ENCODE measurements at regions of chr2 and their contacts with region 1.

Region 1: GRCh38 chr2:128062571-128062970 is 28.4 kb upstream of the UGGT1 start:
- DNase-seq: no peak
- H3K4me3 ChIP-seq: no peak overlapping the region
- H3K27ac ChIP-seq: no peak overlapping the region
- H3K4me1 ChIP-seq: no peaks in the 10 kb centered on the region
- H3K27me3 ChIP-seq: peaks cover 0 to 2% of the 10 kb centered on the region in 2 experiments
- CTCF ChIP-seq: no peak
- POLR2A ChIP-seq: no peak

Region 2: DNA sequence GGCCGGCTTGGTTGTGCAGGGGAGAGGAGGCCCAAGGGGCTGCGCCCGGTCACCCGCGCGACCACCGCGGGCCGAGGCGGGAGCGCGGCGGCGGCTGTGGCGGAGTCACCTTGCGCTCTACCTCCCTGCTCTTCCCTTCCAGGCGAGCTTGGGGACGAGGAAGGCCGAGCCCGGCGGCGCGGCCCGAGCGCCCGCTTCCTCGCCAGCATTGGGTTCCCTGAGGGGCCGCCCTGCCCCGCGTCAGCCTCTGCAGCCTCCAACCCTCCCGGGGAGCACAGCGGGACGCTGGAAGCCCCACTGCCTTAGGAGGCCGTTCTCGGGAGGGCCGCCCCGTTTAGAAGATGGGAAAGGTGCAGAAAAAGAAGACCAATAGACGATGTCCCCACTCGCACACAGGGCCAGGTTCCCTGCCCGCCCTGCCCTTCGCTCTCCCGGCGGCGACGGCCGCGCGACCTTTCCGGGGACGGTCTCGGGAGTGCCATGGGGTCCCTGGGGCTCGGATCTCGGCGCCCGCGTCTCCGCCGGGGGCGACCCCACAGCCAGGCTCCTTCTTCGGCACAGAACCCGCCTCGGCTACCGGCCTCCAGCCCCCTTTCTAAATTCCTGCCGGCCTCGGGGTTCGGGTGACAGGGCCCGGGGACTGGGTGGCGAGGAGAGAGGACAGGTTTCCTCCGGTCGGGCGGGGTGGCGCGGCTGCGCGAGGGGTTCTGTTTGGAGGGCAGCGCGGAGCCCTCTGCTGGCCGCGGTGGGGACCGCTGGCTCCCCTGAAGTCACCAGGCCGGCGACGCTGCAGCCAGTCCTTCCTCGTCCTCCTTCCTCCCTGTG is 170.6 kb after region 1 on chr2:
- CTCF ChIA-PET with region 1: interaction called, 10 read pairs
- POLR2A ChIA-PET with region 1: no interaction called
- dilution Hi-C with region 1: no loop called
- intact Hi-C with region 1: loop called (anchors 1 kb)
- DNase-seq: peak; percentile 72
- H3K4me3 ChIP-seq: peak overlapping the region; percentile 52 to 70 (median 57)
- H3K27ac ChIP-seq: no peak overlapping the region
- H3K4me1 ChIP-seq: peaks cover 13% of the 10 kb centered on the region
- H3K27me3 ChIP-seq: no peaks in the 10 kb centered on the region
- CTCF ChIP-seq: peak; percentile 83 to 98
- POLR2A ChIP-seq: no peak

Region 3: GRCh38 chr2:128380961-128381938 is 318.7 kb after region 1 on chr2:
- CTCF ChIA-PET with region 1: no interaction called
- POLR2A ChIA-PET with region 1: no interaction called
- dilution Hi-C with region 1: no loop called
- intact Hi-C with region 1: no loop called
- DNase-seq: no peak
- H3K4me3 ChIP-seq: no peak overlapping the region
- H3K27ac ChIP-seq: no peak overlapping the region
- H3K4me1 ChIP-seq: no peaks in the 10 kb centered on the region
- H3K27me3 ChIP-seq: peaks cover 0 to 3% of the 10 kb centered on the region in 2 experiments
- CTCF ChIP-seq: no peak
- POLR2A ChIP-seq: no peak

Region 4: GRCh38 chr2:128754246-128754724 is 691.7 kb after region 1 on chr2:
- CTCF ChIA-PET with region 1: interaction called, 6 read pairs
- POLR2A ChIA-PET with region 1: no interaction called
- dilution Hi-C with region 1: no loop called
- intact Hi-C with region 1: loop called (anchors 5 kb)
- DNase-seq: no peak
- H3K4me3 ChIP-seq: no peak overlapping the region
- H3K27ac ChIP-seq: no peak overlapping the region
- H3K4me1 ChIP-seq: no peaks in the 10 kb centered on the region
- H3K27me3 ChIP-seq: no peaks in the 10 kb centered on the region
- CTCF ChIP-seq: no peak
- POLR2A ChIP-seq: no peak

Region 5: DNA sequence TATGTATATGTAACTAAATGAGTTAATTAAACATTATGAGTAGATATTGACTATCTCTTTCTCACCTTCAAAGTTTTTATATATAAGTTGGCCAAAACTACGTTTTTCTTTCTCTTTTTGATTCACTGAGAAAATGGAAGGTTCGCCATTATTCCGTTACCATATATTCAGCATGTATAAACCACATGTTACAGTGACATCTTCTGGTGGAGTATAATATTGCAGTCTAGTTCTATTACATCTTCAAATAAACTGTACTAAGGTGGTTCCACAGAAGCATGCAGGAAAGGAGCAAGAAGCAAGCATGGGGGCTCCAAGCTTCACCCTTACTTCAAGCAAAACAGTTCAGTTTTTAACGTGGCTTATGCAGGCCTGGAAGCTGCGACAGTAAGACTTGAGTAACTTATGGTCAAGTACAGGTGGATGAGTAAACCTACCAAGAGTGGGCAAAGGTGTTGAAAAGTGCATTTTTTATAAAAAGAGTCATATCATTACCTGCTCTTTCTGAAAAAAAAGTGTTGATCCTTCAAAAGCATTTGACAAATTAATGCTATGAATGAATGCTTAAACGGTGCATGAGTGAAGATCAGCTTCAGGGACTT is 1787.1 kb after region 1 on chr2:
- CTCF ChIA-PET with region 1: interaction called, 8 read pairs
- POLR2A ChIA-PET with region 1: no interaction called
- dilution Hi-C with region 1: no loop called
- intact Hi-C with region 1: loop called (anchors 5 kb)
- DNase-seq: peak; percentile 74
- H3K4me3 ChIP-seq: no peak overlapping the region
- H3K27ac ChIP-seq: no peak overlapping the region
- H3K4me1 ChIP-seq: peaks cover 2% of the 10 kb centered on the region
- H3K27me3 ChIP-seq: no peaks in the 10 kb centered on the region
- CTCF ChIP-seq: peak; percentile 37 to 38
- POLR2A ChIP-seq: no peak

Region 6: DNA sequence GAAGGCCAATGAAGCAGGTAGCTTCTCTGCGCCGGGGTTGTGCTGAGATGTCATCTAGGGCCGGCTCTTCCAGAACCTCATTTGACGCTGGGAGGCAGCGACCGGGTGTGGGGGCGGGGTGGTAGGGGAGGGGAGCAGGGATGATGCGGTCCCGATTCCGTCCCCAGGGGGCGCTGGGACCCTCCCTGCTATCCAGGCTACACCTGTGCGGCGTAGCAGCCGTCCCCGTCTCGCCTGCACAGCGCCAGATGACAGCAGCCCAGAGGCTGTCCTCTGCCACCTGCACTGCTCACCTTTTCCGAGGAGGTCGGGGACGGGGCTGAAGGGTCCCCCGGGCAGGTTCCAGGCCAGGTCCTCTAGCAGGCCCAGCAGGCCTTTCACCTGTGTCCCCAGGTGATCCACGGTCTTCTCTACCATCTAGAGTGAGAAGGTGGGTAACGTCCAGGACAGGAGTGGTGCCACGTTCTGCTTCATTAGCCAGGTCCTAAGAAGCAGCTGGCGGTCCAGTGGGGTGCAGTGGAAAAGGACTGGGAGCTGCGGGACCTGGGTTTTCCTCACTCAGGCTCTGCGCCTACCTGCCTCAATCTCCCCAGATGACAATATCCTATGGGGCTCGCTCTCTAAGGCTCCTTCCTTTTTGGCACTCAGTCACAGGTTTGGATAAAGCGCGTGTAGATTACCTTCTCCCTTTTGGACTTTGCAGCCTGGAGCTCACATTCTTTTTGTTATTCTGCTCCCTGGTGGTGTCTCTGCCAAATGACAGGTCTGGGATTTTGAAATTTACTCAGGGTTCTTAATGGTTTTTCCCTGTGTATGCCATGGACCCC is 1860.9 kb after region 1 on chr2:
- CTCF ChIA-PET with region 1: interaction called, 39 read pairs
- POLR2A ChIA-PET with region 1: no interaction called
- dilution Hi-C with region 1: no loop called
- intact Hi-C with region 1: no loop called
- DNase-seq: peak; percentile 36
- H3K4me3 ChIP-seq: no peak overlapping the region
- H3K27ac ChIP-seq: no peak overlapping the region
- H3K4me1 ChIP-seq: no peaks in the 10 kb centered on the region
- H3K27me3 ChIP-seq: no peaks in the 10 kb centered on the region
- CTCF ChIP-seq: peak; percentile 12 to 37
- POLR2A ChIP-seq: no peak

Measured in endothelial cell of umbilical vein (primary cell).